H1 (cell line): ENCODE measurements at regions of chr1 and their contacts with region 1.

Region 1: DNA sequence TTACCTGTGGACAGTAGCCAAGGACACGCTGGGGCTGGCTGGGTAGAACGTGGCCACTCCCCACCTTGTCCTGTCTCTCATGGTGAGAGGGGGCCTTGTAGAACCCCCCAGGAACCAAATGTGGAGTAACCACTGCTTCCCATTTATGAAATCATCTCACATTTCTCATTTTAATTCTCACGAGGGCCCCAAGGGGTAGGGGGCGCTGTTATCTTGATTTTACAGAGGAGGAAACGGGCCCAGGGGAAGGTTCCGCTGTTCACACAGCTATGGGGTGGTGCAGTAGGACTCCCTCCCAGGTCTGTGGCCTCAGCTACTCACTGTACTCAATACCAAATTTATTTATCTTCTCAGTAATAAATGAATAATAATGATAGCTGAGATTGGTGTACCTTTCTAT is 5.5 kb downstream of the SMPDL3B start:
- DNase-seq: peak in 1 of 2 experiments; percentile 73
- H3K4me3 ChIP-seq: no peak overlapping the region
- H3K27ac ChIP-seq: no peak overlapping the region
- H3K4me1 ChIP-seq: peaks cover 16 to 25% (median 19%) of the 10 kb centered on the region in 4 experiments
- H3K27me3 ChIP-seq: no peaks in the 10 kb centered on the region
- CTCF ChIP-seq: peak; percentile 40 to 52 (median 43); a peak in 3 of 4 replicates
- EP300 ChIP-seq: no peak
- POLR2A ChIP-seq: no peak
- RAD21 ChIP-seq: peak; percentile 35 to 55; a peak in 3 of 4 replicates

Region 2: DNA sequence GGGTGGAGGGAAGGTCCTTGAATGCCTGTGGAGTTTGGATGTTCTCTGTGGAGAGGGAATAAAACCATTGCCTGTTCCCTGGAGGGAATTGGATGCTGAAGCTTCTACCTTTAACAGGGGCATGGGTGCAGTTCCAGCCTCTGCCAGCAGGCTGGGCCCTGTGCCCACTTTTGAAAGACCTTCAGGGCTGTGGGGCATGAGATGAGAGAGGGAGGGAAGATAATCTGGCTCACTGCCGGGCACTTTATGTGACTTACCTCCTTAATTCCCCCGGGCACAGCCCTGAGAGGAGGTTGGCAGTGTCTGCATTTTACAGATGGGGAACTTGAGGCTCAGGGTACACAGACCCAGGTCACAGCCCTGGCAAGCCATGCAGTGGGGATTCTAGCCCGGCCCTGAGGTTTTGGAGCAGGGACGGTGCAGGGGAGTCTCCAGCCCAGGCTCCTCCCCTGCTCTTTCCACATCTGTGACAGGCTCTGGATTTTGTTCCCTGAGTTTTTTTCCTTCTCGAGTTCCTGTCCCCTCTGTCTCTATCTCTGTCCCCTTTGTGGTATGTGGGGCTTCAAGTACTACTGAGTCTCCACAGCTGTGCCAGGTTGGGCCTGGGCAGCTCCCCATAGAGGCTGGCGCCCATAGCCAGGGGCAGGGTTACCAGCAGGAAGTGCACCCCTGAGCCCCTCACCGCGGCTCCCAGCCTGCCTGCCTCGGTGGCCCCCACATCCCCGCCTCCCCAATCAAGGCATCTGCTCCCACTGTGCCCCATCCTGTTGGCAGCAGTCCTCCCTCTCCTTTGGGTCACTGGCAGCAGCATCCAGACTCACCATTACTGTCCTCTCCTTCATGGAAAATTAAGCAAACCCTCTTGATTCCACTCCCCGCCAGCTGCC is 82.0 kb before region 1 on chr1:
- CTCF ChIA-PET with region 1: interaction called, 16 read pairs
- POLR2A ChIA-PET with region 1: interaction called, 4 read pairs
- DNase-seq: peak; percentile 64 to 96
- H3K4me3 ChIP-seq: peak overlapping the region in 1 of 4 experiments; percentile 6; a peak in 1 of 8 replicates
- H3K27ac ChIP-seq: no peak overlapping the region
- H3K4me1 ChIP-seq: no peaks in the 10 kb centered on the region; a peak in 1 of 7 replicates
- H3K27me3 ChIP-seq: no peaks in the 10 kb centered on the region
- CTCF ChIP-seq: peak; percentile 89 to 99 (median 97)
- EP300 ChIP-seq: no peak
- POLR2A ChIP-seq: no peak
- RAD21 ChIP-seq: peak; percentile 99 to 100

Region 3: GRCh38 chr1:27952147-27952546 is 11.8 kb after region 1 on chr1:
- CTCF ChIA-PET with region 1: interaction called, 46 read pairs
- POLR2A ChIA-PET with region 1: interaction called, 28 read pairs
- DNase-seq: no peak
- H3K4me3 ChIP-seq: no peak overlapping the region
- H3K27ac ChIP-seq: no peak overlapping the region
- H3K4me1 ChIP-seq: no peaks in the 10 kb centered on the region
- H3K27me3 ChIP-seq: no peaks in the 10 kb centered on the region
- CTCF ChIP-seq: no peak
- EP300 ChIP-seq: no peak
- POLR2A ChIP-seq: no peak
- RAD21 ChIP-seq: no peak

Region 4: DNA sequence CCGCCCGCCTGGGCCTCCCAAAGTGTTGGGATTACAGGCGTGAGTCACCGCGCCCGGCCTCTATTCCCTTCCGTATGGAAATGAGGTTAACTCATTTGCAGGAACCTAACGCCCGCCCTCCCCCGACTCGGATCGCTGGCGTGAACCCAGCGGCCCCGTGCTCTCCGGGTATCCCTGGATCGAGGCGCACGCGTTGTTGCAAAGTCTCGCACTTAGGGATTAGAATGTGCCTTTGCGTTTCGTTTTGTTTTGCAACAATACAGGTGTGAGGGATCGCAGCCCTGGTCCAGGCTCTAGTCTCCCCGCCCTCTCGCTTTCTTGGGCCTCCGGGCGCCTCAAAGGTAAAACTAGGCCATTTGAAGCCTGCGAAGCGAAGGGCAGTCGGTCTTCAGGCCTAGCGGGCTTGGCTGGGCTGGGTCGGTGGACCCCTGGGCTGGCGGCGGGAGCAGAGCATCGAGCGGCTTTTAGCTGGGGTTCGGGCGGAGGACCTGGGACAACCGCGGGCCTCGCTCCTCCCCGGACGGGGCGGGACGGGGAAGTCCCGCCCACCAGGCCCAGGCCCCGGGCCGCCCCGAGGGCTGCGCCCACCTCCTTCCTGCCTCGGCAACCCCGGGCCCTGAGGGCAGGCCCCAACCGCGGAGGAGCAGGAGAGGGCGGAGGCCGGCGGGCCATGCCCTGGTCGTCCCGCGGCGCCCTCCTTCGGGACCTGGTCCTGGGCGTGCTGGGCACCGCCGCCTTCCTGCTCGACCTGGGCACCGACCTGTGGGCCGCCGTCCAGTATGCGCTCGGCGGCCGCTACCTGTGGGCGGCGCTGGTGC is 19.3 kb after region 1 on chr1 and contains the start of gene XKR8:
- CTCF ChIA-PET with region 1: interaction called, 46 read pairs
- POLR2A ChIA-PET with region 1: interaction called, 18 read pairs
- DNase-seq: peak; percentile 70 to 92
- H3K4me3 ChIP-seq: peak within 1 kb of the TSS; percentile 70 to 80 (median 72)
- H3K27ac ChIP-seq: peak within 1 kb of the TSS; percentile 84
- H3K4me1 ChIP-seq: peaks cover 0 to 11% (median 8%) of the 10 kb centered on the region in 4 experiments; a peak in 6 of 7 replicates
- H3K27me3 ChIP-seq: no peaks in the 10 kb centered on the region
- CTCF ChIP-seq: peak in 1 of 3 experiments; percentile 77; a peak in 2 of 4 replicates
- EP300 ChIP-seq: no peak
- POLR2A ChIP-seq: peak; percentile 37 to 78
- RAD21 ChIP-seq: no peak
- total RNA-seq, gene XKR8: 13.8 and 14.2 TPM in 2 replicates

Region 5: DNA sequence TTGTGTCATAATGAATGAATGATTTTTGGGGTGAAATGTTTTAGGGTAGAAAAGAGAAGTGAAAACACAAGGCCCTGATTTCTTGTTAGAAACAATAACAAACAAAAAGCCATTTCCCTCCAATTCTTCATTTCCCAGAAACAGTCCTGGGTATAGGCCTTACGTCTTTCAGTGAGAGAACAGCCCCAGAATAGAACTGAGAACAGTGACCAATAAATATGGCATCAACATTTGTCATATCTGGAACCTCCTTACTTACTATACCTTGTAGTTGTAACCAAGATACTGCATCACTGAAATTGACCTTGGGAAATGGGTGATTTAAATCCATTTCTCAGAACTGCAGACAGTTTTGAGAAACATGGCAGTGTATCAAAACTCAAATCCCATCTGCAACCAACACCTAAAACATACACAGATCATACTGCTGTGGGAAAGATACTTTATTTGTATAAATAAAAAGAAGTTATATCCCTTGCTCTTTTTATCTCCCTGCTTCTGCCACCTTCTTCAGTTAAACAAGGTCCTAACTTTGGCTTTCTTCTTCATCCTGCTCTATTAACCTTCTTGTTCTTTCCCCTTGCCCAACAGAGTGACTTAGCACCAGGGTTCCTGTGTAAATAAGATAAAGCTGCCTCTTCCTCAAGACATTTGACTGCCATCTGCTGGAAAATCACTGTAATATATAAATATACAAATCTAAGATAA is 39.0 kb after region 1 on chr1:
- CTCF ChIA-PET with region 1: interaction called, 12 read pairs
- POLR2A ChIA-PET with region 1: no interaction called
- DNase-seq: no peak
- H3K4me3 ChIP-seq: no peak overlapping the region
- H3K27ac ChIP-seq: no peak overlapping the region
- H3K4me1 ChIP-seq: no peaks in the 10 kb centered on the region
- H3K27me3 ChIP-seq: no peaks in the 10 kb centered on the region
- CTCF ChIP-seq: peak in 1 of 3 experiments; percentile 40; a peak in 1 of 4 replicates
- EP300 ChIP-seq: no peak
- POLR2A ChIP-seq: no peak
- RAD21 ChIP-seq: peak; percentile 57 to 67

Region 6: GRCh38 chr1:28045777-28046176 is 105.5 kb after region 1 on chr1:
- CTCF ChIA-PET with region 1: no interaction called
- POLR2A ChIA-PET with region 1: no interaction called
- DNase-seq: no peak
- H3K4me3 ChIP-seq: no peak overlapping the region
- H3K27ac ChIP-seq: no peak overlapping the region
- H3K4me1 ChIP-seq: 0 out of 7 replicates have a peak, but pooled peaks cover 0 to 2% (median 0%) of the 10 kb centered on the region in 4 experiments
- H3K27me3 ChIP-seq: no peaks in the 10 kb centered on the region
- CTCF ChIP-seq: no peak
- EP300 ChIP-seq: no peak
- POLR2A ChIP-seq: no peak
- RAD21 ChIP-seq: no peak

Region 7: GRCh38 chr1:28104866-28105467 is 164.7 kb after region 1 on chr1:
- CTCF ChIA-PET with region 1: no interaction called
- POLR2A ChIA-PET with region 1: no interaction called
- DNase-seq: peak; percentile 81 to 87
- H3K4me3 ChIP-seq: peak overlapping the region; percentile 4 to 49 (median 22); a peak in 6 of 8 replicates
- H3K27ac ChIP-seq: peak overlapping the region; percentile 18; the same call in 1 of the 2 replicates
- H3K4me1 ChIP-seq: peaks cover 0 to 2% (median 0%) of the 10 kb centered on the region in 4 experiments; a peak in 2 of 7 replicates
- H3K27me3 ChIP-seq: no peaks in the 10 kb centered on the region
- CTCF ChIP-seq: no peak
- EP300 ChIP-seq: no peak
- POLR2A ChIP-seq: peak; percentile 68 to 86
- RAD21 ChIP-seq: no peak

Region 8: GRCh38 chr1:28115267-28115666 is 175.0 kb after region 1 on chr1:
- CTCF ChIA-PET with region 1: no interaction called
- POLR2A ChIA-PET with region 1: no interaction called
- DNase-seq: no peak
- H3K4me3 ChIP-seq: no peak overlapping the region
- H3K27ac ChIP-seq: no peak overlapping the region
- H3K4me1 ChIP-seq: no peaks in the 10 kb centered on the region
- H3K27me3 ChIP-seq: no peaks in the 10 kb centered on the region
- CTCF ChIP-seq: no peak
- EP300 ChIP-seq: no peak
- POLR2A ChIP-seq: no peak
- RAD21 ChIP-seq: no peak